ENCODE measurements at regions of chr3 and their contacts with region 1.

Region 1: GRCh38 chr3:50611464-50612233 is at the start of gene CISH:
- DNase-seq: peak; percentile 99
- ATAC-seq: peak; percentile 63
- H3K4me3 Mint-ChIP-seq: peak within 1 kb of the TSS; percentile 94
- H3K27ac Mint-ChIP-seq: peak within 1 kb of the TSS; percentile 100
- H3K4me1 Mint-ChIP-seq: peaks cover 18% of the 10 kb centered on the region
- H3K27me3 Mint-ChIP-seq: no peaks in the 10 kb centered on the region
- CTCF ChIP-seq: peak; percentile 25
- total RNA-seq, gene CISH: 307 to 308 TPM

Region 2: DNA sequence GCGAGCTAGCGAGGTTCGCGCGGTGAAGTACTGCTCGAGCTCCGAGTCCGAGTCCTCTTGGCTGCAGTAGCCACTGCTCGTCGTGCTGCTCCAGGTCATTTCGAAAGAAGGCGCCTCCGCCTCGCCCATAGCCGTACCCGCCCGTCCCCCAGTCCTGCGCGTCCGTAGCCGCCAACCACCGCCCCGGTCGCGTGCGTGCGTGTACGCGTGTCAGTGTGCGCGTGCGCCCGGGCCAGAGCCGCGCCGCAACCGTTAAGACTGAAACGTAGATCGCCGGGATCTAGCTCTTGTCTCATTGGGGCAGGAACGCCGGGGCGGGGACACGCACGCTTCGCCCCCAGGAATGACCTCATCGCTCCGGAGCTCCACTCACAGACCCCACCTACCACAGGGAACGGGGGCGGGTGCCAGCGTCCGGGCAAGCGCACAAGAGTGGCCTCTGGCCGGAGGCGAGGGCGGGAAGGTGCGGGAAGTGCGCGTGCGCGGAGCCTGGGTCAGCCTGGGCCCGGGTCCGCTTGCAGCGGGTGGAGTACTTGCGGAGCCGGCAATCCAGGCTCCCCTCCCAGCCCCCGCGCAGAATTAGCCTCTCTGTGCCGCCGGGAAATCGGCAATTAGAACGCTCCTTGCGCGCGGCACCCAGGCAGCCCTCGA is 274.3 kb before region 1 on chr3:
- CTCF ChIA-PET with region 1: interaction called, 4 read pairs
- POLR2A ChIA-PET with region 1: interaction called, 67 read pairs
- intact Hi-C with region 1: no loop called
- DNase-seq: peak; percentile 100
- ATAC-seq: peak; percentile 79
- H3K4me3 Mint-ChIP-seq: peak overlapping the region; percentile 88
- H3K27ac Mint-ChIP-seq: peak overlapping the region; percentile 91
- H3K4me1 Mint-ChIP-seq: peaks cover 44% of the 10 kb centered on the region
- H3K27me3 Mint-ChIP-seq: no peaks in the 10 kb centered on the region
- CTCF ChIP-seq: no peak

Region 3: GRCh38 chr3:50587806-50588758 is 23.6 kb before region 1 on chr3:
- CTCF ChIA-PET with region 1: interaction called, 217 read pairs
- POLR2A ChIA-PET with region 1: interaction called, 2,276 read pairs
- intact Hi-C with region 1: no loop called
- DNase-seq: peak; percentile 96
- ATAC-seq: peak; percentile 48
- H3K4me3 Mint-ChIP-seq: peak overlapping the region; percentile 59
- H3K27ac Mint-ChIP-seq: peak overlapping the region; percentile 100
- H3K4me1 Mint-ChIP-seq: peaks cover 89% of the 10 kb centered on the region
- H3K27me3 Mint-ChIP-seq: no peaks in the 10 kb centered on the region
- CTCF ChIP-seq: no peak

Region 4: GRCh38 chr3:50627407-50628051 is 15.9 kb after region 1 on chr3:
- CTCF ChIA-PET with region 1: interaction called, 67 read pairs
- POLR2A ChIA-PET with region 1: interaction called, 30 read pairs
- intact Hi-C with region 1: no loop called
- DNase-seq: peak; percentile 51
- ATAC-seq: peak; percentile 38
- H3K4me3 Mint-ChIP-seq: no peak overlapping the region
- H3K27ac Mint-ChIP-seq: peak overlapping the region; percentile 83
- H3K4me1 Mint-ChIP-seq: peaks cover 95% of the 10 kb centered on the region
- H3K27me3 Mint-ChIP-seq: no peaks in the 10 kb centered on the region
- CTCF ChIP-seq: peak; percentile 34

Region 5: DNA sequence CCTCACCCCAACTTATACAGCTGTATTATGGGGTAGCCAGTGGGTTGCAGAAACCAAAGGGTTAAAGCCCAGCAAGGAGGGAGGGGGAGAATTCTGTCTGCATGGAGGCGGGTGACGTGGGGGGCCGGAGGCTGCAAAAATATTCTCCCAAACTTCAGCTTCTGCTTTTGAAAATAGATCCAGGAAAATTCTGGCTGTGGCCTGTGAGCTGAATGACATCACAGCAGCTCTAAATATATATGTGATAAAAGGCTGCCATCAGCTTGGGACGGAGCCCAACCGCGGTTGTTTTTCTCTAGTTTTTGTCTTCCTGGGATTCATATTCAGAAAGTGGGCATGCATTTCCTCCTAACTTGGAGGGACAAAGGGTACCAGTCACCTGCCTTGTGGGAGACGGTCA is 32.9 kb after region 1 on chr3:
- CTCF ChIA-PET with region 1: interaction called, 20 read pairs
- POLR2A ChIA-PET with region 1: interaction called, 5 read pairs
- intact Hi-C with region 1: no loop called
- DNase-seq: no peak
- ATAC-seq: no peak
- H3K4me3 Mint-ChIP-seq: no peak overlapping the region
- H3K27ac Mint-ChIP-seq: no peak overlapping the region
- H3K4me1 Mint-ChIP-seq: peaks cover 4% of the 10 kb centered on the region
- H3K27me3 Mint-ChIP-seq: no peaks in the 10 kb centered on the region
- CTCF ChIP-seq: no peak

Region 6: GRCh38 chr3:50674349-50675178 is 62.9 kb after region 1 on chr3 and contains the start of gene DOCK3:
- CTCF ChIA-PET with region 1: interaction called, 16 read pairs
- POLR2A ChIA-PET with region 1: interaction called, 19 read pairs
- intact Hi-C with region 1: no loop called
- DNase-seq: peak; percentile 58
- ATAC-seq: peak; percentile 85
- H3K4me3 Mint-ChIP-seq: peak within 1 kb of the TSS; percentile 75
- H3K27ac Mint-ChIP-seq: peak within 1 kb of the TSS; percentile 61
- H3K4me1 Mint-ChIP-seq: peaks cover 12% of the 10 kb centered on the region
- H3K27me3 Mint-ChIP-seq: peaks cover 28% of the 10 kb centered on the region
- CTCF ChIP-seq: no peak
- total RNA-seq, gene DOCK3: 3.6 to 4.2 TPM

Region 7: GRCh38 chr3:50840983-50841489 is 229.4 kb after region 1 on chr3:
- CTCF ChIA-PET with region 1: no interaction called
- POLR2A ChIA-PET with region 1: no interaction called
- intact Hi-C with region 1: no loop called
- DNase-seq: no peak
- ATAC-seq: no peak
- H3K4me3 Mint-ChIP-seq: no peak overlapping the region
- H3K27ac Mint-ChIP-seq: no peak overlapping the region
- H3K4me1 Mint-ChIP-seq: peaks cover 9% of the 10 kb centered on the region
- H3K27me3 Mint-ChIP-seq: peaks cover 12% of the 10 kb centered on the region
- CTCF ChIP-seq: no peak

Region 8: DNA sequence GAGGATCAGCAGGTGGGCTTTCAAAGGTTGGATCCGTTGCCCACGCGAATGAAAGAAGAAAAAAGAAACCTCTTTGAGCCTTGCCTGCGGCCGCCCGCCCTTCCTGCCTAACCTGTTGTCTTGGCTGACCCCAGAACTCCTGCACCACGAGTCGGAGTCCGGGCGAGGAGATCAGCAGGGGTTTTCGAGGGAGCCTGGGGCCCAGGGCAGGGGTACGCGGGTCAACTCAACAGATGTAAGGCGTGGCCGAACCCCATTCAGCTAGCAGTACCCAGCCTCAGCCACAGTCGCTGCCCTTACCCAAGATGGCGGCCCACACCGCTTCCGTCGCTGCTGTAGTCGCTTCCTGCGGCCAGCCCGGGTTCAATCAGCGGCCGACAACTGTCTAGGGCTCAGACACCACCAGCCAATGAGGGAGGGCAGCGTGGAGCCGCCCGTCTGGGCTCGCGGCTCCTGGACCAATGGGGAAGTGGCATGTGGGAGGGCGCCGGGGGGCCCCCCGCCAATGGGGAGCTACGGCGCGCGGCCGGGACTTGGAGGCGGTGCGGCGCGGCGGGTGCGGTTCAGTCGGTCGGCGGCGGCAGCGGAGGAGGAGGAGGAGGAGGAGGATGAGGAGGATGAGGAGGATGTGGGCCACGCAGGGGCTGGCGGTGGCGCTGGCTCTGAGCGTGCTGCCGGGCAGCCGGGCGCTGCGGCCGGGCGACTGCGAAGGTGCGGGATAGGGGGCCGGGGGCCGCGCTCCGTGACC is 773.3 kb after region 1 on chr3 and contains the start of gene MANF:
- CTCF ChIA-PET with region 1: interaction called, 20 read pairs
- POLR2A ChIA-PET with region 1: interaction called, 11 read pairs
- intact Hi-C with region 1: loop called (anchors 5 kb)
- DNase-seq: peak; percentile 99
- ATAC-seq: peak; percentile 96
- H3K4me3 Mint-ChIP-seq: peak within 1 kb of the TSS; percentile 88
- H3K27ac Mint-ChIP-seq: peak within 1 kb of the TSS; percentile 97
- H3K4me1 Mint-ChIP-seq: peaks cover 43% of the 10 kb centered on the region
- H3K27me3 Mint-ChIP-seq: no peaks in the 10 kb centered on the region
- CTCF ChIP-seq: no peak
- total RNA-seq, gene MANF: 107 to 109 TPM